ENCODE measurements at regions of chr5 and their contacts with region 1.

Region 1: GRCh38 chr5:134738133-134738962 is at the start of gene CAMLG:
- DNase-seq: peak; percentile 99
- ATAC-seq: peak; percentile 97
- H3K4me3 Mint-ChIP-seq: peak within 1 kb of the TSS; percentile 94
- H3K27ac Mint-ChIP-seq: peak within 1 kb of the TSS; percentile 95
- H3K4me1 Mint-ChIP-seq: peaks cover 27% of the 10 kb centered on the region
- H3K27me3 Mint-ChIP-seq: no peaks in the 10 kb centered on the region
- total RNA-seq, gene CAMLG: 19.8 to 35.2 TPM

Region 2: DNA sequence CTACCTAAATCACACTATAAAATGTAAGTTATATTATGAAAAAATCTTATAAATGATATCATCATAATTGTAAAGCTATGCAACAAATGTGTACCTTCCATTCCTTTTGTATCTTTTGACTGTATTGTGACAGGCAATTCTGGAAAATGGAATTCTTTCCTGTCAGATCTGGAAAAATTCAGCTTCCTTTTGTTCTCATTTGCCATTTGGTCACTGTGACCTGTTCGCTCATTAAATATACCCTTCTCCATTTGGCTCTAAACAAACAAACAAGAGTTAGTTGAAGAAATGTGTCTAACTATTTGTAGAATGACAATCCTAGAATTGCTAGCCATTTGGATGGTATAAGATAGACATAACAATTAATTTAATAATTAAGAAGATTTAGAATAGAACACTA is 434.0 kb before region 1 on chr5:
- CTCF ChIA-PET with region 1: no interaction called
- POLR2A ChIA-PET with region 1: no interaction called
- intact Hi-C with region 1: loop called in 1 of 2 experiments (anchors 5 kb)
- DNase-seq: no peak
- ATAC-seq: no peak
- H3K4me3 Mint-ChIP-seq: no peak overlapping the region
- H3K27ac Mint-ChIP-seq: no peak overlapping the region
- H3K4me1 Mint-ChIP-seq: no peaks in the 10 kb centered on the region
- H3K27me3 Mint-ChIP-seq: no peaks in the 10 kb centered on the region

Region 3: DNA sequence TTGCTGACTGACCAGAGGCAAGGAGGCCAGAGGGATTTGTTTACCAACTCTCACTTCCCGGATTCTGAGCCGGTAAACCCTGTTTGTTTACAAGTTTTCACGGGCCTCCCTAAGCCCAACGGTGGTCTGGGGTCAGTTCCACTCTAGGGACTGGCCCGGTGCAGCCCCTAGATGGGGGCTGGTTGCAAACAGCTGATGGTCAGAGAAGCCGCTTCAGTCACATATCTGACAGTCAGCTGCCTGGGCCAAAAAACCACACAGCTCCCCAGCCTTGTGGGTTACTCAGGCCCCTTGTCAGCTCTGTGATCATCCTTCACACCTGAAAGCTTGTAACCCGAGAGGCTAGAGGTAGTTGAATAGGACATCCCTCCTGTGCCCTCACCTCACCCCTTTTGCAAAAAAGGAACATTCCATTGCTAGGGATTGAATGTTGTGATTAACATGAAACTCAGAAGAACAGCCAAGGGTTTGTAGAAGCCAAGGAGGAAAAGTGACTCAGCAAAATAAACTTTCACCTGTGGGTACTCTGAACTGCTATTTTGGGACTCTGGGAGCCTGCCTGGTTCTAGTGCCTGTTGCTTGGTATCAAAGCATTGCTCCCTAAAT is 146.1 kb before region 1 on chr5:
- CTCF ChIA-PET with region 1: interaction called, 7 read pairs
- POLR2A ChIA-PET with region 1: interaction called, 3 read pairs
- intact Hi-C with region 1: loop called (anchors 1 to 5 kb)
- DNase-seq: no peak
- ATAC-seq: no peak
- H3K4me3 Mint-ChIP-seq: no peak overlapping the region
- H3K27ac Mint-ChIP-seq: no peak overlapping the region
- H3K4me1 Mint-ChIP-seq: peaks cover 19% of the 10 kb centered on the region
- H3K27me3 Mint-ChIP-seq: peaks cover 3% of the 10 kb centered on the region

Region 4: DNA sequence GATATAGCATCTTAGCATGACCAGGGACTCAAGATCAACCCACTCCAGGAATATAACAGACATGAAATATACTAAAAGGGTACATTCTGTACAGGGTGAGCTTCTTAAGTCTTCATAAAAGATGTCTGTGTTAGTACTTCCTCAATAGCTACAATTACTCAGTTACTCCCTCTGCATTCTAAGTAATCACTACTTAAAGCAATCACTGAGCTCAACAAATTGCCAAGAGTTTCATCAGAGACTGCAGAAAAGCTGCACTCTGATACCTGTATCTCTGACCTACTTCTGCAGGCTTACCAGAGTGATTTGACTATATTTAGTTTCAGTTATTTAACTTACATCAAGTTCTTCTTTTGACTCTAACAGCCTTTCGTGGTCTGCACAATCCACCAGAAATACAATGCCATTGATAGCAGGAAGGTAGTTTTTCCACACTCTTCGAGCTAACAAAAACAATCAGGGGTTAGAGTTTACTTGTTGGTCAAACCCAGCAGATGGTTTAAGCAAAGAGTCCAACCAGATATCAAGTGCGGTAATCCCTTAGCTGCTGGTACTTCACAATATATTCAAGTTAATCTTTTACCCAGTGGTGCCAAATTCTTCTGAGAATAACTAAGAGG is 129.0 kb before region 1 on chr5:
- CTCF ChIA-PET with region 1: no interaction called
- POLR2A ChIA-PET with region 1: interaction called, 13 read pairs
- intact Hi-C with region 1: loop called in 1 of 2 experiments (anchors 5 kb)
- DNase-seq: peak; percentile 29
- ATAC-seq: peak; percentile 75
- H3K4me3 Mint-ChIP-seq: peak overlapping the region; percentile 13
- H3K27ac Mint-ChIP-seq: peak overlapping the region; percentile 94
- H3K4me1 Mint-ChIP-seq: peaks cover 42% of the 10 kb centered on the region
- H3K27me3 Mint-ChIP-seq: no peaks in the 10 kb centered on the region

Region 5: GRCh38 chr5:134758504-134759341 is 20.4 kb after region 1 on chr5 and contains the start of gene DDX46:
- CTCF ChIA-PET with region 1: interaction called, 50 read pairs
- POLR2A ChIA-PET with region 1: interaction called, 19 read pairs
- intact Hi-C with region 1: loop called (anchors 1 kb)
- DNase-seq: peak; percentile 98
- ATAC-seq: peak; percentile 99
- H3K4me3 Mint-ChIP-seq: peak within 1 kb of the TSS; percentile 94
- H3K27ac Mint-ChIP-seq: peak within 1 kb of the TSS; percentile 89
- H3K4me1 Mint-ChIP-seq: peaks cover 29% of the 10 kb centered on the region
- H3K27me3 Mint-ChIP-seq: no peaks in the 10 kb centered on the region
- total RNA-seq, gene DDX46: 63.5 to 86.7 TPM

Region 6: DNA sequence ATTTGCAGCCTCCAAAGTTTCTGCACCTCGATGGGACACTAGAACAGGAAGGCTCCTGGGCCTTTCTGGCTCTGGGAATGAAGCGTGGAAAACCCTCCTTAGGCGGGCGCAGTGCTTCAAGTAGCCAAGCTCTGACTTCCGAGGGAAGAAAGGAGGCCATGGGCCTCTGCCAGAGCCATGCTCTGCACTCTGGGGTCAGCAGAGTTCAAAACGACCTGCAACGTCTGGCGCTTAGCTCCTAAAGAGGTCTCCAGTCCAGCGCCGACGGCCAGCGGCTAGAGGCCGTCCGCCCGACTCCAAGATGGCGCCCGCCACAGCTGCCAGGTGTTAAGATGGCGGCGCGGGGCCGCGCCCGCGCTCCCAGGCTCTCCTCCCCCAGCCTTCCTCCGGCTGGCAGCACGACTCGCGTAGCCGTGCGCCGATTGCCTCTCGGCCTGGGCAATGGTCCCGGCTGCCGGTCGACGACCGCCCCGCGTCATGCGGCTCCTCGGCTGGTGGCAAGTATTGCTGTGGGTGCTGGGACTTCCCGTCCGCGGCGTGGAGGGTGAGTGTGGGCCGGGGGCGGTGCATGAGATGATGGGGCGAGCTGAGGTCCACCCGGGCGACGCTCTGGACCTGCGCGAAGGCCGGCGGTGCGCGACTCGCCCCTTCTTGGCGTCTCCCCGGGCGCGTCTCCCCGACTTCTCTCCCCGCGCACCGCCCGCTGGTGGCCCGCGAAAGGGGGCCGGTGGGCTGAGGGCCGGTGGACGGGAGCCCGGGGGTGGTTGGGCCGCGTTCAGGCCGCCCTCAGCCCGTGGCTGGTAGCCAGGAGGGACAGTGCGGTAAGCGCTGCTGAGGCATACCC is 135.9 kb after region 1 on chr5 and contains the start of gene TXNDC15:
- CTCF ChIA-PET with region 1: interaction called, 4 read pairs
- POLR2A ChIA-PET with region 1: no interaction called
- intact Hi-C with region 1: loop called in 1 of 2 experiments (anchors 1 kb)
- DNase-seq: peak; percentile 90
- ATAC-seq: peak; percentile 83
- H3K4me3 Mint-ChIP-seq: peak within 1 kb of the TSS; percentile 88
- H3K27ac Mint-ChIP-seq: peak within 1 kb of the TSS; percentile 97
- H3K4me1 Mint-ChIP-seq: peaks cover 37% of the 10 kb centered on the region
- H3K27me3 Mint-ChIP-seq: no peaks in the 10 kb centered on the region
- total RNA-seq, gene TXNDC15: 16.6 to 29.1 TPM

Region 7: GRCh38 chr5:135191084-135191826 is 452.9 kb after region 1 on chr5:
- CTCF ChIA-PET with region 1: no interaction called
- POLR2A ChIA-PET with region 1: no interaction called
- intact Hi-C with region 1: loop called in 1 of 2 experiments (anchors 1 kb)
- DNase-seq: peak; percentile 89
- ATAC-seq: peak; percentile 98
- H3K4me3 Mint-ChIP-seq: peak overlapping the region; percentile 53
- H3K27ac Mint-ChIP-seq: no peak overlapping the region
- H3K4me1 Mint-ChIP-seq: peaks cover 2% of the 10 kb centered on the region
- H3K27me3 Mint-ChIP-seq: peaks cover 13% of the 10 kb centered on the region